Heart left ventricle (tissue), 16 donors: ENCODE measurements at regions of chr9 and their contacts with region 1.

Region 1: DNA sequence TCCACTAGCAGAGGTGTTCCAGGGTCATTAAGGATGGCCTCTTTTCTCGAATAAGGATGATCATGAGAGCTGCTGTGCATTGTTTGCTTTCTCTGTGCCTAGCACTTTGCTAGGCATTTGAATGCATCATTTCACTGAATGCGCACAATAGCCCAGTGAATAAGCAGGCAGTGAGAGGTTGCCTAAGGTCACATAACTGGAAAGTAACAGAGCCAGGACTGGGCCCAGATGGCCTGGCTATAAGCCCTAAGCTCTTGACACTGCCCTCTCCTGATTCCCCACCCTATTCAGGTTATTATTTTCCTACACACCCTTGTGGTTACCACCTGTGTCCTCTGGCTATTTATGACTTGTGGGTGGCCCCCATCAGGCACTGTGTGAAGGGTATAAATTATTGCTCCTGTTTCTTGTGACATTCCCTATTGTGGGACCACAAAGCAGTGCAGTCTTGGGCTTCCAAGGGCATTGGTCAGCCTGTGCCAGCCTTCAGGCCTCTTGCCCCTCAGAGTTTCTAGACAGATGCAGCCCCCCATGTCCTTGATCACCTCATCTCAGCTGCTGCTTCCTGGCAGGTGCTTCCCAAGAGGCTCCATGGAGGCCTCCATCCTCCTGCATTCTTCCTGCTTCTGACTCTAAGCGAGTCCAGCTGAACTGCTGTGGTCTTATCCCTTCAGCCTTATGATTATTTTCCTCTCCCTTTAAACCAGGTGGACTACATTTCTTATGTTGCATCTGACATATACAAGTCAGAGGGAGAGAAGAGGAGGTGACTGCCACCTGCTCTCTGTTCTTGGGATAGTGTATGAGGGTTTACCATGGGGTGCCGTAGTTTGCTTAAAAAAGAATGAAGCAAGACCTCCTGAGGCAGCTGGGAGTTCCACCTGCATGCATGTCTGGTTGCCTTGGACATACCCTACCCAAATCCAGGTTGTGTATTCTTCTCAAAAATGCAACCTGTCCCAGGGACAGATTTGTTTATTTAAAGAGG is 47.6 kb downstream of the ANGPTL2 start:
- DNase-seq: peak in 4 of 5 donors; percentile 55 to 65 (median 60)
- ATAC-seq: peak; percentile 94 to 97 (median 95)
- H3K4me3 ChIP-seq: no peak overlapping the region
- H3K27ac ChIP-seq: peak overlapping the region in 10 of 12 donors; percentile 10 to 69 (median 58)
- H3K4me1 ChIP-seq: peaks cover 0 to 50% (median 30%) of the 10 kb centered on the region in 12 donors
- H3K27me3 ChIP-seq: no peaks in the 10 kb centered on the region
- CTCF ChIP-seq: no peak
- POLR2A ChIP-seq: no peak

Region 2: GRCh38 chr9:127021664-127022363 is 53.0 kb before region 1 on chr9:
- intact Hi-C with region 1: loop called in 1 of 10 experiments (anchors 10 kb)
- DNase-seq: peak; percentile 89 to 94 (median 91)
- ATAC-seq: peak; percentile 98 to 99 (median 98)
- H3K4me3 ChIP-seq: no peak overlapping the region
- H3K27ac ChIP-seq: peak overlapping the region in 11 of 12 donors; percentile 62 to 91 (median 82)
- H3K4me1 ChIP-seq: peaks cover 4 to 41% (median 22%) of the 10 kb centered on the region in 12 donors
- H3K27me3 ChIP-seq: no peaks in the 10 kb centered on the region
- CTCF ChIP-seq: no peak
- POLR2A ChIP-seq: no peak

Region 3: DNA sequence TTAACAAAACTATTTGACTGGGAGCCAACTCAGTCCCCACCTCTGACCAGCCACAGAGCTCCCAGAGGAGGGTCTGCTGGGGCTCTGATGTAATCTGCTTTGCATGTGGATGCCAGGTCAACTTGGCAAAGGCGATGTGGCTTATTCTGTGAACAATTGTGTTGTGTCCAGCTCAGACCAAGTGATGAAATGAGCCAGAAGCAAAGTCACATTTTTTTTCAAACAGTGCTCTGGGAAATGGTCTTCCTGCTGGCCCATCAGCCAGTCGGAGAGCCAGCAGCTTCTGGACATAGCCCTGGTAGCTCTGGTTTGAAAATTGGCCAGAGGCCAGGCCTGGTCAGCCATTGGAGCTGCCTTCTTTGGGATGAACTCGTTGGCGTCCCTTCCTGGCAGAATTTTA is 38.9 kb before region 1 on chr9:
- intact Hi-C with region 1: loop called in 1 of 10 experiments (anchors 1 kb)
- DNase-seq: peak; percentile 60 to 82 (median 70)
- ATAC-seq: peak in 3 of 4 donors; percentile 80 to 87 (median 81)
- H3K4me3 ChIP-seq: no peak overlapping the region
- H3K27ac ChIP-seq: peak overlapping the region in 11 of 12 donors; percentile 37 to 79 (median 58)
- H3K4me1 ChIP-seq: peaks cover 0 to 42% (median 30%) of the 10 kb centered on the region in 12 donors
- H3K27me3 ChIP-seq: no peaks in the 10 kb centered on the region
- CTCF ChIP-seq: no peak
- POLR2A ChIP-seq: no peak

Region 4: DNA sequence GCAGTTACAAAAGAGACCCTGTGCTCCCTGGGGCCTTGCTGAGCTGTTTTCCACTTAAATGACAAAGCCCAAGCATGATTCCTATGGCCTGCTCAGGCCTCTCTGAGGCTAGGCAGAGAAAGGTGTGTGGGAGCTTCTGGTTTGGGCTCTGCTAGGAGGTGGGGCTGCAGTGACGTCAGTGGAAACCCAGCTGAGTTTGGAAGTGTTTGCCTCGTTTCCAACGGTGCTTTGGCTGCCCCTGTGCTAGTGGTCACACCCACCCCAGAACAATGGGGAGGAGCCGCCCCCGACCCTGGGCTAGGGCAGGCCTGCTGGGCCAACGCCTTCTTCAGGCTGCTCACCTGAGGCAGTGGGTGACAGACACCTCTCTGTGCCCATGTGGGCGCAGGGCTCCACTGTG is 37.2 kb after region 1 on chr9:
- intact Hi-C with region 1: no loop called
- DNase-seq: peak in 4 of 5 donors; percentile 62 to 80 (median 79)
- ATAC-seq: peak; percentile 35 to 84 (median 66)
- H3K4me3 ChIP-seq: no peak overlapping the region
- H3K27ac ChIP-seq: peak overlapping the region in 9 of 12 donors; percentile 33 to 75 (median 59)
- H3K4me1 ChIP-seq: peaks cover 14 to 89% (median 50%) of the 10 kb centered on the region in 12 donors
- H3K27me3 ChIP-seq: no peaks in the 10 kb centered on the region
- CTCF ChIP-seq: no peak
- POLR2A ChIP-seq: no peak